ENCODE measurements at regions of chr1 and their contacts with region 1.

Region 1: DNA sequence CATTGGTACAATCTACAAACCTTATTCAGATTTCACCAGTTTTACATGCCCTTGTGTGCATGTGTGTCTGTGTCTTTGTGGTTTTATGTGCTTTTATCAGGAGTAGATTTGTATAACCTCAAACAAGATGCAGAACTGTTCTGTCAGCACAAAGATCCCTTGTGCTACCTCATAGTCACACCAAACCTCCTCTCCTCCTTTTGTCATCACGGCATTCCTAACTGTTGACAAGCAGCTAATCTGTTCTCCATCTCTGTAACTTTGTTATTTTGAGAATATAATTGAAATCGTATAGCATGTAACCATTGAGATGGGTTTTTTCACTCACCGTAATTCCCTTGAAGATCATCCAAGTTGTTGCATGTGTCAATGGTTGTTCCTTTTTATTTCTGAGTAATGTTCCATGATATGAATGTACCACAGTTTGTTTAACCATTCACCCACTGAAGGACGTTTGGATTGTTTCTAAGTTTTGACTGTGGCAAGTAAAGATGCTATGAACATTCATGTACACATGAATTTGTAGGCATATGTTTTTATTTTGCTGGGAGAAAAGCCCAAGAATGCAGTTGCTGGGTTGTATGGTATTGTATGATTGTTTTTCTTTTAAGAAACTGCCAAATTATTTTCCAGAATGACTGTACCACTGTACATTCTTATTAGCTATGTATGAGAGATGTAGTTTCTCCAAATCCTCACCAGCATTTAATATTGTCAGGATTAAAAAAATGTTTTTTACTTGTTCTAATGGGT is 78.1 kb upstream of the B3GALT2 start:
- DNase-seq: no peak

Region 2: GRCh38 chr1:192879406-192879805 is 385.1 kb before region 1 on chr1:
- intact Hi-C with region 1: no loop called
- DNase-seq: no peak

Region 3: GRCh38 chr1:193143285-193143684 is 121.2 kb before region 1 on chr1:
- intact Hi-C with region 1: loop called in 1 of 2 experiments (anchors 5 kb)
- DNase-seq: no peak

Region 4: GRCh38 chr1:193700710-193701355 is 436.3 kb after region 1 on chr1:
- intact Hi-C with region 1: no loop called
- DNase-seq: no peak